CD4-positive, alpha-beta T cell (primary cell): ENCODE measurements at regions of chr19 and their contacts with region 1.

Region 1: GRCh38 chr19:12796146-12797071 is 5.1 kb downstream of the JUNB start:
- DNase-seq: peak in 13 of 14 experiments; percentile 65 to 90 (median 70)
- ATAC-seq: peak; percentile 7
- H3K4me3 ChIP-seq: peak overlapping the region; percentile 37
- H3K4me3 Mint-ChIP-seq: peak overlapping the region; percentile 82
- H3K27ac ChIP-seq: peak overlapping the region; percentile 54 to 55
- H3K27ac Mint-ChIP-seq: peak overlapping the region; percentile 82
- H3K4me1 ChIP-seq: peaks cover 52% of the 10 kb centered on the region
- H3K4me1 Mint-ChIP-seq: peaks cover 36% of the 10 kb centered on the region
- H3K27me3 ChIP-seq: no peaks in the 10 kb centered on the region
- H3K27me3 Mint-ChIP-seq: peaks cover 10% of the 10 kb centered on the region
- CTCF ChIP-seq: peak; percentile 94

Region 2: GRCh38 chr19:12696366-12697335 is 99.8 kb before region 1 on chr19 and contains the start of gene FBXW9:
- CTCF ChIA-PET with region 1: no interaction called
- POLR2A ChIA-PET with region 1: no interaction called
- intact Hi-C with region 1: no loop called
- DNase-seq: peak; percentile 93 to 99 (median 98)
- ATAC-seq: peak; percentile 89
- H3K4me3 ChIP-seq: peak within 1 kb of the TSS; percentile 98
- H3K4me3 Mint-ChIP-seq: peak within 1 kb of the TSS; percentile 92
- H3K27ac ChIP-seq: peak within 1 kb of the TSS; percentile 78 to 90
- H3K27ac Mint-ChIP-seq: peak within 1 kb of the TSS; percentile 95
- H3K4me1 ChIP-seq: peaks cover 23% of the 10 kb centered on the region
- H3K4me1 Mint-ChIP-seq: peaks cover 11% of the 10 kb centered on the region
- H3K27me3 ChIP-seq: no peaks in the 10 kb centered on the region
- H3K27me3 Mint-ChIP-seq: no peaks in the 10 kb centered on the region
- CTCF ChIP-seq: no peak
- total RNA-seq, gene FBXW9: 2.2 to 2.4 TPM

Region 3: GRCh38 chr19:12716861-12717260 is 79.5 kb before region 1 on chr19:
- CTCF ChIA-PET with region 1: interaction called, 7 read pairs
- POLR2A ChIA-PET with region 1: interaction called, 39 read pairs
- intact Hi-C with region 1: loop called in 1 of 2 experiments (anchors 2 kb)
- DNase-seq: peak in 11 of 14 experiments; percentile 21 to 79 (median 40)
- ATAC-seq: peak; percentile 83
- H3K4me3 ChIP-seq: no peak overlapping the region
- H3K4me3 Mint-ChIP-seq: peak overlapping the region; percentile 56
- H3K27ac ChIP-seq: no peak overlapping the region
- H3K27ac Mint-ChIP-seq: no peak overlapping the region
- H3K4me1 ChIP-seq: peaks cover 19% of the 10 kb centered on the region
- H3K4me1 Mint-ChIP-seq: peaks cover 26% of the 10 kb centered on the region
- H3K27me3 ChIP-seq: no peaks in the 10 kb centered on the region
- H3K27me3 Mint-ChIP-seq: no peaks in the 10 kb centered on the region
- CTCF ChIP-seq: no peak

Region 4: GRCh38 chr19:12750851-12751250 is 45.6 kb before region 1 on chr19:
- CTCF ChIA-PET with region 1: no interaction called
- POLR2A ChIA-PET with region 1: no interaction called
- intact Hi-C with region 1: no loop called
- DNase-seq: no peak
- ATAC-seq: no peak
- H3K4me3 ChIP-seq: no peak overlapping the region
- H3K4me3 Mint-ChIP-seq: no peak overlapping the region
- H3K27ac ChIP-seq: no peak overlapping the region
- H3K27ac Mint-ChIP-seq: no peak overlapping the region
- H3K4me1 ChIP-seq: peaks cover 11% of the 10 kb centered on the region
- H3K4me1 Mint-ChIP-seq: peaks cover 6% of the 10 kb centered on the region
- H3K27me3 ChIP-seq: peaks cover 8 to 11% of the 10 kb centered on the region in 2 experiments
- H3K27me3 Mint-ChIP-seq: peaks cover 30% of the 10 kb centered on the region
- CTCF ChIP-seq: no peak

Region 5: DNA sequence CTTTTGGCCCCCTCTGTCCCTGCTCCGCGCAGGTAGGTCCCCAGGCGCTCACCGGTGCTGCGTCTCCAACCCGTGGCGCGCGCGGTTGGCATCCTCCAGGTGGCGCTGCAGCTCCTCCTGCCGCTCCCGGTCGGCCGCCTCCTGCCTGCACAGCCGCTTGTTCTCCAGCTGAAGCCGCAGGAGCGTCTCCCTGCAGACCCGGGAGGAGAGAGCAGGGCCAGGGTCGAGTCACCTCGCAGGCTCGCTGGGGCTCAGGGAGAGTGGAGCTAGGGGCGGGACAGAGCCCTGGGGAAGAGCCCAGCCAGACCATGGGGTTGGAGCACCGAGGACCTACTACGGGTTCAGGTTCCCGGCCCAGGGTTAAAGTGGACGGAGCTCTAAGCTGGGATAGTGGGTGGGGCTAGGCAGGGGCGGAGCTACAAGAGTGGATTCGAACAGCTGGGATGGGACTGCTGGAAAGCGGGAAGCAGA is 30.3 kb before region 1 on chr19:
- CTCF ChIA-PET with region 1: interaction called, 30 read pairs
- POLR2A ChIA-PET with region 1: interaction called, 23 read pairs
- intact Hi-C with region 1: loop called (anchors 1 kb)
- DNase-seq: peak in 10 of 14 experiments; percentile 66 to 91 (median 80)
- ATAC-seq: peak; percentile 77
- H3K4me3 ChIP-seq: no peak overlapping the region
- H3K4me3 Mint-ChIP-seq: no peak overlapping the region
- H3K27ac ChIP-seq: no peak overlapping the region
- H3K27ac Mint-ChIP-seq: no peak overlapping the region
- H3K4me1 ChIP-seq: peaks cover 22% of the 10 kb centered on the region
- H3K4me1 Mint-ChIP-seq: peaks cover 7% of the 10 kb centered on the region
- H3K27me3 ChIP-seq: no peaks in the 10 kb centered on the region
- H3K27me3 Mint-ChIP-seq: no peaks in the 10 kb centered on the region
- CTCF ChIP-seq: peak; percentile 90

Region 6: GRCh38 chr19:12782229-12783028 is 14.0 kb before region 1 on chr19:
- CTCF ChIA-PET with region 1: interaction called, 178 read pairs
- POLR2A ChIA-PET with region 1: interaction called, 348 read pairs
- intact Hi-C with region 1: loop called (anchors 1 kb)
- DNase-seq: peak; percentile 89 to 99 (median 94)
- ATAC-seq: peak; percentile 75
- H3K4me3 ChIP-seq: peak overlapping the region; percentile 61
- H3K4me3 Mint-ChIP-seq: peak overlapping the region; percentile 92
- H3K27ac ChIP-seq: peak overlapping the region; percentile 91 to 98
- H3K27ac Mint-ChIP-seq: no peak overlapping the region
- H3K4me1 ChIP-seq: peaks cover 85% of the 10 kb centered on the region
- H3K4me1 Mint-ChIP-seq: peaks cover 41% of the 10 kb centered on the region
- H3K27me3 ChIP-seq: no peaks in the 10 kb centered on the region
- H3K27me3 Mint-ChIP-seq: no peaks in the 10 kb centered on the region
- CTCF ChIP-seq: no peak

Region 7: DNA sequence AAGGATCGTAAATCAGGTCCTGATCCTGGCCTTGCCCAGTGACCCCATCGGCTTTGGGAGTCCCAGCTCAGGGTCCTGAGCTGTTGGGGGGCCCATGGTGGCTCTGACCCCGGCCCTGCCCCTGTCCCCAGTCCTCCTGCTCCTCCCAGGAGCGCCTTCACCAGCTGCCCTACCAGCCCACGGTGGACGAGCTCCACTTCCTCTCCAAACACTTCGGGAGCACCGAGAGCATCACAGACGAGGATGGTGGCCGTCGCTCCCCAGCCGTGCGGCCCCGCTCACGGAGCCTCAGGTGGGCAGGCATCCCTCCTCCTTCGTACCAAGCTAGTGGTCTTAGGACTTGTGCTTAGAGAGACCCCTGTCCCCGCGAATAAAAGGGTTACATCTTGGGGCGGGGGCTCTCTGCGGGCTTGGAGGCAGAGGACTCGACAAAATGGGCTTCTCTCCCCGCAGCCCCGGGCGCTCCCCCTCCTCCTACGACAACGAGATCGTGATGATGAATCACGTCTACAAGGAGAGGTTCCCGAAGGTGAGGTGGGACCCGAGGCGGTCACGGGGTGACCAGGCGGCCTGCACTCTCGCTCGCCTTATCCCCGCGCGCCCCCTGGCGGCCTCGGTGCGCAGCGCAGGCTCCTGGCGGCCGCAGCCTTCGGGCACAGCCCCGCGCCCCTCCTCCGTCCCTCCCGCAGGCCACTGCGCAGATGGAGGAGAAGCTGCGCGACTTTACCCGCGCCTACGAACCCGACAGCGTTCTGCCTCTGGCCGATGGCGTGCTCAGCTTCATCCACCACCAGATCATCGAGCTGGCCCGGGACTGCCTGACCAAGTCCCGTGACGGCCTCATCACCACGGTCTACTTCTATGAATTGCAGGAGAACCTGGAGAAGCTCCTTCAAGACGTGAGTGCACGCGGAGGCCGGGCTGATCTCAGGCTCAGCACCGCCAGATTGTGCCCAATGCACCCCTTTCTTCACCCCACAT is 51.0 kb after region 1 on chr19:
- CTCF ChIA-PET with region 1: interaction called, 3 read pairs
- POLR2A ChIA-PET with region 1: interaction called, 4 read pairs
- intact Hi-C with region 1: loop called in 1 of 2 experiments (anchors 1 kb)
- DNase-seq: peak; percentile 59 to 88 (median 77)
- ATAC-seq: peak; percentile 95
- H3K4me3 ChIP-seq: peak overlapping the region; percentile 31
- H3K4me3 Mint-ChIP-seq: no peak overlapping the region
- H3K27ac ChIP-seq: no peak overlapping the region
- H3K27ac Mint-ChIP-seq: no peak overlapping the region
- H3K4me1 ChIP-seq: peaks cover 11% of the 10 kb centered on the region
- H3K4me1 Mint-ChIP-seq: no peaks in the 10 kb centered on the region
- H3K27me3 ChIP-seq: peaks cover 29 to 41% of the 10 kb centered on the region in 2 experiments
- H3K27me3 Mint-ChIP-seq: peaks cover 43% of the 10 kb centered on the region
- CTCF ChIP-seq: peak; percentile 99